Activated T-helper 1 cell treated with anti-CD3 and anti-CD28 coated beads, Interleukin-12 subunit alpha, Interleukin-12 subunit beta, Interleukin-2, Interleukin-4 antibody, amounts not matched to agents 30 ng/mL and 10 ng/mL and 1 ng/mL, durations not matched to agents 14 hours and 24 hours and 36 hours (primary cell): ENCODE measurements at regions of chr20 and their contacts with region 1.

Region 1: GRCh38 chr20:1965520-1966351 is 28.1 kb downstream of the PDYN start:
- DNase-seq: peak; percentile 61
- H3K4me3 Mint-ChIP-seq: peak overlapping the region; percentile 46
- H3K27ac Mint-ChIP-seq: no peak overlapping the region
- H3K4me1 Mint-ChIP-seq: peaks cover 10% of the 10 kb centered on the region
- H3K27me3 Mint-ChIP-seq: peaks cover 10% of the 10 kb centered on the region

Region 2: DNA sequence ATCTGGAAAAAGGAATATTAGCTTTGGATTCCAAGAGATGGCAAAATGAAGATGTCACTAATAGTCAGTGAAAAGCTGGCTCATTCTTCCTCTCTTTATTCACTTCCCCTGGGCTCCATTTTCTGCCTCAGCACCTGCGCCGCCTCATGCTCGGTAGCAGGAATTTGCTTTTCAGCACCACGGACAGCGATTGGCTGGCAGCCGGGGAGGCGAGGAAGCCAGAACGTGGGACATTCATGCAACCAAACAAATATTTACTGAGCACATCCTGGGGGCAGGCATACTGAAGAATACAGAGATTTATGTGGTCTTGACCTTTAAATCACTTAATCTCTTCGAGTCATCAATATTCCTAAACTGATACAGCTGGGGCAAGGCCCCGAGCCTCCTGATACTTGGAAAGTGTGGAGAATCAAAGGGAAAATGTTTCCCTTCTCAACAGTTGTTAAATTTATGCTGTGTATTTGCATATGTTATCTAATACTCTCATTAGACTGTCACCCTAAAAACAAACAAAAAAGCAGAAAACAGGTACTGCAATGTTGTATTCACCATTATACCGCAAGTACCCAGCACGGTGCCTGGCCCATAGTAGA is 40.2 kb after region 1 on chr20:
- intact Hi-C with region 1: loop called (anchors 1 kb)
- DNase-seq: peak; percentile 54
- H3K4me3 Mint-ChIP-seq: no peak overlapping the region
- H3K27ac Mint-ChIP-seq: no peak overlapping the region
- H3K4me1 Mint-ChIP-seq: no peaks in the 10 kb centered on the region
- H3K27me3 Mint-ChIP-seq: peaks cover 14% of the 10 kb centered on the region

Region 3: GRCh38 chr20:2093159-2093781 is 127.5 kb after region 1 on chr20:
- intact Hi-C with region 1: loop called (anchors 1 kb)
- DNase-seq: no peak
- H3K4me3 Mint-ChIP-seq: no peak overlapping the region
- H3K27ac Mint-ChIP-seq: no peak overlapping the region
- H3K4me1 Mint-ChIP-seq: peaks cover 5% of the 10 kb centered on the region
- H3K27me3 Mint-ChIP-seq: peaks cover 32% of the 10 kb centered on the region

Region 4: GRCh38 chr20:2172305-2173175 is 206.8 kb after region 1 on chr20:
- intact Hi-C with region 1: loop called (anchors 1 kb)
- DNase-seq: peak; percentile 40
- H3K4me3 Mint-ChIP-seq: no peak overlapping the region
- H3K27ac Mint-ChIP-seq: no peak overlapping the region
- H3K4me1 Mint-ChIP-seq: peaks cover 5% of the 10 kb centered on the region
- H3K27me3 Mint-ChIP-seq: peaks cover 5% of the 10 kb centered on the region

Region 5: DNA sequence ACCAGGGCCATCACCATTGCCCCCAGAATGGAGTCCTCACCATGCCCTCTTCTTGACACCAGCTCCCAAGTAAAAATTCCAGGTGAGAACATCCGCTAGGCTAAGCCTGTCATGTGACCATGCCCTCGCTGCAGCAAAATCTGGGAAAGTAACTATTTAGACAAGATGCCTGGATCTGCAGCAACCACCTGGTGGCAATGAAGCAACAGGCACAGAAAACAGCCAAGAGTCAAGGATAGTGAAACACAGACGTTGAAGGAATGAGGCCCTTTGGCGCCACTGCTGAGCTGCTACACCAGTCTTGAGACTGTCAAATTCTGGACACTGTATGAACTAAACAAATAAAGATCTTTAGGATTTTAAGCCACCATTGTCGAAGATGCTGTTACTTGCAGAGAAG is 384.9 kb after region 1 on chr20:
- intact Hi-C with region 1: loop called (anchors 2 kb)
- DNase-seq: no peak
- H3K4me3 Mint-ChIP-seq: no peak overlapping the region
- H3K27ac Mint-ChIP-seq: no peak overlapping the region
- H3K4me1 Mint-ChIP-seq: peaks cover 9% of the 10 kb centered on the region
- H3K27me3 Mint-ChIP-seq: peaks cover 44% of the 10 kb centered on the region

Region 6: GRCh38 chr20:2451939-2452732 is 486.4 kb after region 1 on chr20:
- intact Hi-C with region 1: loop called (anchors 5 kb)
- DNase-seq: peak; percentile 50
- H3K4me3 Mint-ChIP-seq: no peak overlapping the region
- H3K27ac Mint-ChIP-seq: no peak overlapping the region
- H3K4me1 Mint-ChIP-seq: peaks cover 30% of the 10 kb centered on the region
- H3K27me3 Mint-ChIP-seq: peaks cover 2% of the 10 kb centered on the region